ENCODE measurements at regions of chr17 and their contacts with region 1.

Region 1: DNA sequence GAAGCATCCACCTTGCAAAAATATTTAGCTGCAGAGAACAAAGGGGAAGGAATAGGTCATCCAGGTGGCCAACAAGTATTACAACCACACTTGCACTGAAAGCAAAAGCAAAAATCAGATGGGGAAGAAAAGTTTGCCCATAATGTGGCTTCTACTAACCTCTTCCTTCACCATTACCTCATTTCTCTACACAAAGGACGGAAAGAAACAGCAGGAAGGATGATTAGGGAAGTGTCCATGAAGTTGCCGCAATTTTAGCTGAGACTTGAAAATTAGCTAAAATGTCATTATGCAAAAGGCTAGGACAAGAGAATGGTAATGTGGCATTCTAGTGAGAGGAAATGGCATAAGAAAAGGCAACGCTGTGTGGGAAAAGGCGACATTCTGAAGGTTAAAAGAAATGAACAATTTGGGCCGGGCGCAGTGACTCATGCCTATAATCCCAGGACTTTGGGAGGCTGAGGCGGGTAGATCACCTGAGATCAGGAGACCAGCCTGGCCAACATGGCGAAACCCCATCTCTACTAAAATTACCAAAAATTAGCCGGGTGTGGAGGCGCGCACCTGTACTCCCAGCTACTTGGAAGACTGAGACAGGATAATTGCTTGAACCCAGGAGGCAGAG is 13.7 kb downstream of the KANSL1 start:
- DNase-seq: no peak
- ATAC-seq: peak; percentile 25 to 28
- H3K4me3 ChIP-seq: no peak overlapping the region
- H3K27ac ChIP-seq: no peak overlapping the region
- H3K4me1 ChIP-seq: peaks cover 8% of the 10 kb centered on the region
- H3K27me3 ChIP-seq: no peaks in the 10 kb centered on the region

Region 2: GRCh38 chr17:45828628-45829027 is 350.9 kb before region 1 on chr17:
- intact Hi-C with region 1: no loop called
- DNase-seq: peak in 1 of 3 donors; percentile 31
- ATAC-seq: no peak
- H3K4me3 ChIP-seq: no peak overlapping the region
- H3K27ac ChIP-seq: no peak overlapping the region
- H3K4me1 ChIP-seq: no peaks in the 10 kb centered on the region
- H3K27me3 ChIP-seq: no peaks in the 10 kb centered on the region

Region 3: GRCh38 chr17:46072998-46073397 is 106.5 kb before region 1 on chr17:
- intact Hi-C with region 1: no loop called
- DNase-seq: no peak
- ATAC-seq: no peak
- H3K4me3 ChIP-seq: no peak overlapping the region
- H3K27ac ChIP-seq: no peak overlapping the region
- H3K4me1 ChIP-seq: no peaks in the 10 kb centered on the region
- H3K27me3 ChIP-seq: no peaks in the 10 kb centered on the region

Region 4: GRCh38 chr17:46115699-46116098 is 63.8 kb before region 1 on chr17:
- intact Hi-C with region 1: loop called in 1 of 4 experiments (anchors 10 kb)
- DNase-seq: no peak
- ATAC-seq: peak; percentile 72 to 79
- H3K4me3 ChIP-seq: no peak overlapping the region
- H3K27ac ChIP-seq: no peak overlapping the region
- H3K4me1 ChIP-seq: peaks cover 1% of the 10 kb centered on the region
- H3K27me3 ChIP-seq: no peaks in the 10 kb centered on the region